ENCODE measurements at regions of chr7 and their contacts with region 1.

Region 1: DNA sequence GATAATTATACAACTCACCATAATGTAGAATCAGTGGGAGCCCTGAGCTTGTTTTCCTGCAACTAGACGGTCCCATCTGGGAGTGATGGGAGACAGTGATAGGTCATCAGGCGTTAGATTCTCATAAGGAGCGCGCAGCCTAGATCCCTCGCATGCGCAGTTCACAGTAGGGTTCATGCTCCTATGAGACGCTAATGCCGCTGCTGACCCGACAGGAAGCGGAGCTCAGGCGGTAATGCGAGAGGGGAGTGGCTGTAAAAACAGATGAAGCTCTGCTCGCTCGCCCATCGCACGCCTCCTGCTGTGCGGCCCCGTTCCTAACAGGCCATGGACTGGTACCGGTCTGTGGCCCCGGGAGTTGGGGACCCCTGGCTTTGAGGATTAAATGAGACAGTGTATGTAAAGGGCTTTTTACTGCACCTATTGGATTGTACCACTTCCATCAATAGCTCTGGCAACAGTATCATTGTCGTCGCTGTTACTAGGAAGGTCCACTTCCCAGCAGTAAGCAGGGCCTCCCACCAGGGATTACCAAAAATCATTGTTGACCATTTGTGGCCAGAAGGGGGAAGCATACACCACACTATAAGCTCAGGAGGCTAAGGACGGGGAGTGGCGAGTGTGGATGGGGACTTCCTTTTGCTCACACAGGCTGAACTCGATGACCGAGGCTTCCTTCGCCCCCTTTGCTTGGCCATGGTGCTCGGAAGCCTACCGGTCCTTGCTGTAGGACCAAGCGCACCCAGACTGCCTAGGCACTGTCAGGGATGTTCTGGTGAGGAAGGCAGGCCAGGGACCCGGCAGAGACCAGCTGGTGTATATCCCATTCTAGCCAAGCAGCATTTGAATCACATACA is 26.4 kb downstream of the AKR1B1 start:
- DNase-seq: peak; percentile 92
- ATAC-seq: peak; percentile 95
- H3K4me3 ChIP-seq: peak overlapping the region; percentile 72
- H3K27ac ChIP-seq: peak overlapping the region; percentile 56
- H3K4me1 ChIP-seq: peaks cover 28% of the 10 kb centered on the region
- H3K27me3 ChIP-seq: no peaks in the 10 kb centered on the region
- CTCF ChIP-seq: peak; percentile 91

Region 2: GRCh38 chr7:134254311-134254710 is 178.2 kb before region 1 on chr7:
- CTCF ChIA-PET with region 1: no interaction called
- POLR2A ChIA-PET with region 1: no interaction called
- intact Hi-C with region 1: no loop called
- DNase-seq: peak; percentile 44
- ATAC-seq: peak; percentile 58
- H3K4me3 ChIP-seq: no peak overlapping the region
- H3K27ac ChIP-seq: no peak overlapping the region
- H3K4me1 ChIP-seq: no peaks in the 10 kb centered on the region
- H3K27me3 ChIP-seq: peaks cover 14% of the 10 kb centered on the region
- CTCF ChIP-seq: peak; percentile 51; the same call in 1 of the 2 replicates

Region 3: GRCh38 chr7:134420424-134421125 is 11.9 kb before region 1 on chr7:
- CTCF ChIA-PET with region 1: interaction called, 15 read pairs
- POLR2A ChIA-PET with region 1: interaction called, 3 read pairs
- intact Hi-C with region 1: no loop called
- DNase-seq: peak; percentile 79
- ATAC-seq: peak; percentile 84
- H3K4me3 ChIP-seq: no peak overlapping the region
- H3K27ac ChIP-seq: peak overlapping the region; percentile 18; the same call in 1 of the 2 replicates
- H3K4me1 ChIP-seq: peaks cover 32% of the 10 kb centered on the region
- H3K27me3 ChIP-seq: no peaks in the 10 kb centered on the region
- CTCF ChIP-seq: peak; percentile 90

Region 4: GRCh38 chr7:134480736-134481135 is 48.2 kb after region 1 on chr7:
- CTCF ChIA-PET with region 1: interaction called, 16 read pairs
- POLR2A ChIA-PET with region 1: interaction called, 11 read pairs
- intact Hi-C with region 1: loop called (anchors 1 kb)
- DNase-seq: peak; percentile 78
- ATAC-seq: peak; percentile 97
- H3K4me3 ChIP-seq: no peak overlapping the region
- H3K27ac ChIP-seq: no peak overlapping the region
- H3K4me1 ChIP-seq: peaks cover 16% of the 10 kb centered on the region
- H3K27me3 ChIP-seq: no peaks in the 10 kb centered on the region
- CTCF ChIP-seq: no peak

Region 5: DNA sequence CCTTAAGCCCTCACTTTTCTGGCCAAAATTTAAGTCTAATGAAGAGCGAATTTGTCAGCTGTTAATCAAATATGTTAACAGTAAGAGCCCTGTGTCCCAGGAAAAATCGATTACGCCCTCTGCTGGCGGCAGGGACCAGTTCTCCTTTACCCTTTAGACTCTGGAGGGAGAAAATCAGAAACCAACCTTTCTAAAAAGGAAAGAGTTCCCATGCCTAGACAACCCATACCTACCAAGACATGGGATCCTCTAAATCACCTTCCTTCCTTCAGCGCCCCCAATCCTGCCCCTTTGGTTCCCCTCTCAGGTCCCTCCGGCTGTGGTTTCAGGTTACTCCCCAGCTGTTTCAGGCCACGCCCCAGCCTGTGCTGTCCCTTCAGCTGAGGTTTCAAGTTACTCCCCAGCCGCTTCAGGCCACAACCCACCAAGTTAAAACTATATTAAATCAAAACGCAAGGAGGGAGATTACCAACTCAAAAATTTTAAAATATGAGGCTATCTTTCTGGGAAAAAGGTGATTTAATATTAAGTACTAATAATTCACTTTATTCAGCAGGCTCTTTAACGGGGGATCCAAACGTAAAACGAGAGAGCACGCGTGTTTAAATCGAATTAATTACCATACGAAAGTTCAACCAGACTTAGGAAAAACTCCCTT is 115.0 kb after region 1 on chr7:
- CTCF ChIA-PET with region 1: interaction called, 13 read pairs
- POLR2A ChIA-PET with region 1: interaction called, 16 read pairs
- intact Hi-C with region 1: no loop called
- DNase-seq: peak; percentile 74
- ATAC-seq: peak; percentile 94
- H3K4me3 ChIP-seq: peak overlapping the region; percentile 62
- H3K27ac ChIP-seq: peak overlapping the region; percentile 43
- H3K4me1 ChIP-seq: peaks cover 28% of the 10 kb centered on the region
- H3K27me3 ChIP-seq: no peaks in the 10 kb centered on the region
- CTCF ChIP-seq: peak; percentile 96

Region 6: GRCh38 chr7:134954197-134955082 is 521.9 kb after region 1 on chr7:
- CTCF ChIA-PET with region 1: no interaction called
- POLR2A ChIA-PET with region 1: no interaction called
- intact Hi-C with region 1: loop called (anchors 10 kb)
- DNase-seq: peak; percentile 50
- ATAC-seq: peak; percentile 59
- H3K4me3 ChIP-seq: no peak overlapping the region
- H3K27ac ChIP-seq: no peak overlapping the region
- H3K4me1 ChIP-seq: no peaks in the 10 kb centered on the region
- H3K27me3 ChIP-seq: no peaks in the 10 kb centered on the region
- CTCF ChIP-seq: peak; percentile 74